ENCODE measurements at regions of chr1 and their contacts with region 1.

Region 1: DNA sequence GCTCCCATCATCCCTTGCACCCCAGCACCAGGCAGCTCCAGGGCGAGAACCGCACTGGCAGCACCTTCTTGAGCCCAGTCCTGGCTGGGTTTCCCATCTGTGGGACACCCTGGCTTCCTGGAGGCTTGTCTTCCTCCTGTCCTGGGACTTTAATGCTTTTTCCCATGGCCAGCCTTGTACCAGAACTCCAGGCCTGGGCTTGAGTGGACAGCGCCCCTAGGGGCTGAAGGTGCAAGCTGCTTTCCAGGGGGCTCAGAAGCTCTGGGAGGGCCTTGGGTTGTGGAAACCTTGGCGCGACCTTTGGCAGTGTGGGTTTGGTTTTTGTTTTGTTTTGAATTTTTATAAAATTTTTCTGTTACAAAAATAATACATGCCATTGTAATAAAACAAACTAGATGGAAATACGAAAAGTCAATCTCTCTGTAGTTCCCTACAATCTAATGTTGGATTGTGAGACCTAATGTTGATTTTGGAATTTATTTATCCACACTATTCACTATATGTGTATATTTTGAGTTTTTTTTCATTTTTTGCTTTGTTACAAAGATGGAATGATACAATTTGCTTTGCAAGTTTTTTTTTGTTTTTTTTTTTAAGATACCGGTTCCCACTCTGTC is 33.8 kb upstream of the RPL11 start:
- DNase-seq: peak; percentile 74
- ATAC-seq: peak; percentile 92
- H3K4me3 Mint-ChIP-seq: no peak overlapping the region
- H3K27ac Mint-ChIP-seq: no peak overlapping the region
- H3K4me1 Mint-ChIP-seq: no peaks in the 10 kb centered on the region
- H3K27me3 Mint-ChIP-seq: no peaks in the 10 kb centered on the region
- CTCF ChIP-seq: peak; percentile 89

Region 2: DNA sequence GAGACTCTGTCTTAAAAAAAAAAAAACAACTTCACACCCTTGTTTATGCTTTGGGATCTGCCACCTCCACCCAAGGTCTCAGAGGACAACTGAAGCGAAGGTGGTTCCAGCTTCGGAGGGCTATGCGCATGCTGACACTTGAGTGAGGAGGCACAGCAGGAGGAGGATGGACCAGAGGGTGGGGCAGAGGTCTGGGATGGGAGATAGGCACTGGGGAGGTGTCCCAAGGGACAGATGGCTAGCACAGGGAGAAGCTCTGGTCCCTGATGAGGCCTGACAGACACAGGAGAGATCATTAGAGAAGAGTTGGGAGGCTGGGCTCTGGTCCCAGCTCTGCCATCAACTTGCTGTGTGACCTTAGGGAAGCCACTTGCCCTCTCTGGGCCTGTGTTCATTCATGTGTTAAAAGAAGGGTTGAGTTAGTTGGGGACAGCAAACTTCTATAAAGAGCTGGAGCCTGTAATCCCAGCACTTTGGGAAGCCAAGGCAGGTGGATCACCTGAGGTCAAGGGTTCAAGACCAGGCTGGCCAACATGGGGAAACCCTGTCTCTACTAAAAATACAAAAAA is 143.6 kb before region 1 on chr1:
- CTCF ChIA-PET with region 1: no interaction called
- POLR2A ChIA-PET with region 1: no interaction called
- intact Hi-C with region 1: no loop called
- DNase-seq: no peak
- ATAC-seq: no peak
- H3K4me3 Mint-ChIP-seq: no peak overlapping the region
- H3K27ac Mint-ChIP-seq: no peak overlapping the region
- H3K4me1 Mint-ChIP-seq: no peaks in the 10 kb centered on the region
- H3K27me3 Mint-ChIP-seq: no peaks in the 10 kb centered on the region
- CTCF ChIP-seq: no peak

Region 3: GRCh38 chr1:23530747-23531561 is 126.8 kb before region 1 on chr1 and contains the start of gene E2F2:
- CTCF ChIA-PET with region 1: interaction called, 13 read pairs
- POLR2A ChIA-PET with region 1: no interaction called
- intact Hi-C with region 1: no loop called
- DNase-seq: peak; percentile 89
- ATAC-seq: peak; percentile 75
- H3K4me3 Mint-ChIP-seq: peak within 1 kb of the TSS; percentile 86
- H3K27ac Mint-ChIP-seq: peak within 1 kb of the TSS; percentile 97
- H3K4me1 Mint-ChIP-seq: peaks cover 59% of the 10 kb centered on the region
- H3K27me3 Mint-ChIP-seq: no peaks in the 10 kb centered on the region
- CTCF ChIP-seq: no peak
- total RNA-seq, gene E2F2: 23.7 to 25.3 TPM

Region 4: DNA sequence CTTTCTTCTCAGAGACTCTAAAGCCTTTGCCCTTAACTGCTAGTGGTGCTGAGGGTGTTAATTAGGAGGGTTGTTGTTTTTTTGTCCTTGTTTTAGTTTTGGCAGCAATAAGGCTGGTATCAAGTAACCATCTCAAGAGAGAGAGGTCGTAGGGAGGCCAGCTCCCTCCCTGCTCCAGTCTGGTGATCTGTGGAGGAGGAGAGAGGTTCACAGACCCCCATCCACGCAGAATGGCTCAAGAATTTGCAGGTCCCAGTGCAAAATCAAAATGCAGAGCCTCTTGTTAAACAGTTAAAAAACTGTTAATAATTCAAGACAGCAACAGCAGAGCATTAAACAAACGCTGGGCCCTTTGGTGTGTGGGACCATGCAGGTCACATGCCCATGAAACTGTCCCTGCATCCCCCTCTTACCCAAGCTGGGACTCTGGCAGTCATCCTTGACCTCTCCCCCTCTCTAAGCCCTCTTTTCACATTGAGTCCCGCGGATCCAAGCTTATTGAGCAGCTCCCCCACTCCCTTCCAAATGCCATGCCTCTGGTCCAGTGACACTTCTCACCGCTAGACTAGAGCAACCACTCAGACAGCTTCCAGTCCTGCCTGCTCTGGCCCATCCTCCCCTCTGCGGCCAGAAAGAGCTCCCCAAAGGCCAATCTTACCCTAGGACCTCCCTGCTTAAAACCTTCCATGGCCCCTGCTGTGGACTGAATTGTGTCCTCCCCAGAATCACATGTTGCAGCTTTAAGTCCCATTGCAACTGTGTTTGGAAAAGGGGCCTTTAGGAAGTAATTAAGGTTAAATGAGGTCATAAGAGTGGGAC is 13.8 kb before region 1 on chr1:
- CTCF ChIA-PET with region 1: interaction called, 19 read pairs
- POLR2A ChIA-PET with region 1: interaction called, 3 read pairs
- intact Hi-C with region 1: no loop called
- DNase-seq: no peak
- ATAC-seq: no peak
- H3K4me3 Mint-ChIP-seq: no peak overlapping the region
- H3K27ac Mint-ChIP-seq: no peak overlapping the region
- H3K4me1 Mint-ChIP-seq: no peaks in the 10 kb centered on the region
- H3K27me3 Mint-ChIP-seq: no peaks in the 10 kb centered on the region
- CTCF ChIP-seq: no peak

Region 5: DNA sequence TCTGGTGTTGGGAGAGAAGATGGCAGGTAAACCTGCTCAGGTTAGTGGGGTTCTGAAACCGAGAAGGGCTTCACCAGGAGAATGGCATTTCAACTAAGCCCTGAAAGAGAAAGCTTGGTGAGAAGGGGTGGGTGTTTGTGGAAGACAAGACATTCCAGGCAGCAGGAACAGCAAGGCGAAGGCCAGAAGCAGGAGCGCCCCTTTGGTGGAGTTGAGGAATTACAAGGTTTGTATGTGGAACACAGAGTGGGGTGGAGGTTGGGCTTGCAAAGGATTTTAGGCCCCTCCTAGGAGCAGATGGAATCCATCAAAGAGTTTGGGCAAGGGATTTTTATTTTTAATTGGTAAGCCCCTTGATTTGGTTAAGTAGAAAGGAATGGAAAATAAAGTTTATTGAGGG is 60.7 kb after region 1 on chr1:
- CTCF ChIA-PET with region 1: no interaction called
- POLR2A ChIA-PET with region 1: no interaction called
- intact Hi-C with region 1: no loop called
- DNase-seq: no peak
- ATAC-seq: no peak
- H3K4me3 Mint-ChIP-seq: no peak overlapping the region
- H3K27ac Mint-ChIP-seq: no peak overlapping the region
- H3K4me1 Mint-ChIP-seq: peaks cover 26% of the 10 kb centered on the region
- H3K27me3 Mint-ChIP-seq: no peaks in the 10 kb centered on the region
- CTCF ChIP-seq: peak; percentile 13

Region 6: DNA sequence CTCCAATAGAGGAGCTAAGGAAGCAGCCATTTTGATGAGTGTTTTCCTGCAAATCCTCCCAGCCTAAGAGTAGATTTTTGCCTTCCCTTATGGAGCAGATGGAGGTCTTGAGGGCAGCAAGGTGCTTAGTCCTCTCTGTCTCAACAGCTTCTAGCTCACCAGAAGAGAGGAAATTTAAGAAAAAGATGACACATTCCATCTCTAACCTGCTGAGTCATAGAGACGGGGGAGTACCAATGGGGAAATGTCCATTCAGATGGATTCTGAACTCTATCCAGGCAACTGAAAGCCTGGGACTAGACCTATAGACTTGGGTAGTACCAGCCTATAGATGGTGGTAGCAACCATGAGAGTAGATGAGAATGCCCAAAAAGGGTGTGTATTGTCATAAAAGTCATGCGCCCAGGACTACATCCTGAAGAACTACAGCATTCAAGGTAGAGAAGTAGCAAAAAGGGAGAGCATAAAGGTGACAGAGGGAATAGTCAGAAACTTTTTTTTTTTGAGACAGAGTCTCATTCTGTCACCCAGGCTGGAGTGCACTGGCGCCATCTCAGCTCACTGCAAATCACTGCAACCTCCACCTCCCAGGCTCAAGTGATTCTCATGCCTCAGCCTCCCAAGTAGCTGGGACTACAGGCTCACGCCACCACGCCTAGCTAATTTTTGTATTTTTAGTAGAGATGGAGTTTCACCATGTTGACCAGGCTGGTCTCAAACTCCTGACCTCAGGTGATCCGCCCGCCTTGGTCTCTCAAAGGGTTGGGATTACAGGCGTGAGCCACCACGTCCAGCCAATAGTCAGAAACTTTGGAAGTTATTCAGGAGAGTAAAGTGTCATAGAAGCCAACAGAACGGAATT is 74.8 kb after region 1 on chr1:
- CTCF ChIA-PET with region 1: no interaction called
- POLR2A ChIA-PET with region 1: no interaction called
- intact Hi-C with region 1: no loop called
- DNase-seq: no peak
- ATAC-seq: no peak
- H3K4me3 Mint-ChIP-seq: no peak overlapping the region
- H3K27ac Mint-ChIP-seq: no peak overlapping the region
- H3K4me1 Mint-ChIP-seq: peaks cover 28% of the 10 kb centered on the region
- H3K27me3 Mint-ChIP-seq: no peaks in the 10 kb centered on the region
- CTCF ChIP-seq: no peak